ENCODE measurements at regions of chr19 and their contacts with region 1.

Region 1: DNA sequence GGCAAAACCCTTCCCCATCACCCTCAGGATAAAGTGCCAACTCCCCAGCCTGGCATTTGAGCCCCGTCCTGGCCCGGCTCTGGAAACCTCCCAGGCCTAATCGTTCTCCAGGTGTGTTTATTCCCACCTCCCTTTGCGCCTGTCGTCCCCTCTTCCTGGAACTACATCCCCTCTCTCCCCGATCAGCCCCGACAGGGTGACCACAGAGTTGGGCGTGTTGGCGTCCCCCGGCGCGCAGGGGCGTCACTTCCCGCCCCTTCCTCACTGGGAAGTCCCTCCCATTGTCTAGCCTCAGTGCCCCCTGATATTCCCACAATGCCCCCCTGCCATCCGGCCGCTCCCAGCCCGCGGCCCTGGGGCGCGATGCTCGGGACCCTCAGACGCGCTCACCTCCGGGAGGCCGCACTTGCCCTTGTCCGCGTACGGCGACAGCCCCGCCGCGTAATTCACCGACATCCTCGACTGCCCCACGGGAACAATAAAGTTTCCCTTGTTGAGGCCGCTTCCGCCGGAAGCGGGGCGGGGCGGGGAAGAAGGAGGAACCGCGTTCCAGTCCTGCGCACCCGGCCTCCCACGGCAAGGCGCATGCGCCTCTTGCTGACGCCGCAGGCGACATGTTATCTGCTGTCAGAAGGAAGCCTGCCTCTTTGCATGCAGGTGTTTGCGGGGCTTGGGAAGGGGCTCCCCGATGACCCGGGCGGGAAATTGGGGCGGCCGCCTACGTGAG is at the starts of genes ANKRD24 and SIRT6:
- DNase-seq: peak; percentile 91
- H3K4me3 ChIP-seq: peak within 1 kb of the TSS; percentile 91 to 94 (median 93)
- H3K27ac ChIP-seq: peak within 1 kb of the TSS; percentile 45
- H3K4me1 ChIP-seq: peaks cover 13% of the 10 kb centered on the region
- H3K27me3 ChIP-seq: no peaks in the 10 kb centered on the region
- CTCF ChIP-seq: no peak
- total RNA-seq, gene ANKRD24: 0.67 to 0.73 TPM
- total RNA-seq, gene SIRT6: 8.7 to 28.8 TPM

Region 2: DNA sequence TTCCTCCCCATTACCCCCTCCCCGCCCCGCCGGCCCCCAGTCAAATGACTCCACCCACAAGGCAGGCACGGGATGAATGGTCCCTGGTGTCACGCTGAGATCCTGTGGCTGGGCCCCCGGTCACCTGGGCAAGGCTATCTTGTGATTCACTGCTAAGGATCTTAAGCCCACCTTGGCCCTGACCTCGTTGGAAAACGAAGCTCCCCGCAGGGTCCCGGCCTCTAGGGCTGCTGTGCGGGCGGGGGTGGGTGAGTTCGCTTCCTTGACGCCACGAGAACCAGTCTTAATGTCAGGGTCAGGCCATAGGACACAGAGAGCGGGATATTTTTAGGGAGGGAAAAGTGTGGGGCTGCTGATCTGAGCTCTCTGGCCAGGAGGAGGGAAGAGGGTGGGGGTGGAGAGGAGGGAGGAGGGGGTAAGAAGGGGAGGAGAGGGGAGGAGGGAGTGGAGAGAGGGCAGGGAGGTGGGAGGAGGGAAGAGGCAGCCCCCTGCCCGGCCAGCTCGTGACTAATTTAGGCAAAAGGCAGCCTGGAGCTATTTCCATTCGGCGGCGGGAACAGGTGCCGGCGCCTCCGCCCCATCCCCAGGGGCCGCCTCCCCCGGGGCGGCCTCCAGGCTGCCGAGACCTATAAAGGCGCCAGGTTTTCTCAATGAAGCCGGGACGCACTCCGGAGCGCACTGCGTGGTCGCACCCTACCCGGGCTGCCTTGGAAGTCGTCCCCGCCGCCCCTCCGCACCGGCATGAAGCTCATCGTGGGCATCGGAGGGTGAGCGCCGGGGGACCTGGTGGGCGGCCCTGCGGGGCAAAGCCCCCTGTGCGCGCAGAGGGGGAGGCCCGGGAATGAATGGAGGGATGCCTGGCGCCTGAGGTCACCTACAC is 249.1 kb before region 1 on chr19 and contains the start of gene NMRK2:
- CTCF ChIA-PET with region 1: no interaction called
- dilution Hi-C with region 1: loop called (anchors 5 kb)
- in situ Hi-C with region 1: no loop called
- intact Hi-C with region 1: no loop called
- DNase-seq: no peak
- H3K4me3 ChIP-seq: no peak within 1 kb of the TSS
- H3K27ac ChIP-seq: no peak within 1 kb of the TSS
- H3K4me1 ChIP-seq: no peaks in the 10 kb centered on the region
- H3K27me3 ChIP-seq: peaks cover 8% of the 10 kb centered on the region
- CTCF ChIP-seq: no peak
- total RNA-seq, gene NMRK2: not detected

Region 3: GRCh38 chr19:4065430-4066175 is 116.6 kb before region 1 on chr19:
- CTCF ChIA-PET with region 1: no interaction called
- dilution Hi-C with region 1: loop called (anchors 5 kb)
- in situ Hi-C with region 1: no loop called
- intact Hi-C with region 1: loop called (anchors 1 kb)
- DNase-seq: peak; percentile 92
- H3K4me3 ChIP-seq: peak overlapping the region; percentile 88 to 92 (median 92)
- H3K27ac ChIP-seq: no peak overlapping the region
- H3K4me1 ChIP-seq: peaks cover 31% of the 10 kb centered on the region
- H3K27me3 ChIP-seq: no peaks in the 10 kb centered on the region
- CTCF ChIP-seq: no peak

Region 4: GRCh38 chr19:4139614-4140236 is 42.5 kb before region 1 on chr19:
- CTCF ChIA-PET with region 1: interaction called, 4 read pairs
- dilution Hi-C with region 1: no loop called
- in situ Hi-C with region 1: no loop called
- intact Hi-C with region 1: loop called (anchors 1 kb)
- DNase-seq: peak; percentile 54
- H3K4me3 ChIP-seq: no peak overlapping the region
- H3K27ac ChIP-seq: no peak overlapping the region
- H3K4me1 ChIP-seq: no peaks in the 10 kb centered on the region
- H3K27me3 ChIP-seq: no peaks in the 10 kb centered on the region
- CTCF ChIP-seq: peak; percentile 86 to 89

Region 5: GRCh38 chr19:4224470-4224869 is 42.2 kb after region 1 on chr19:
- CTCF ChIA-PET with region 1: no interaction called
- dilution Hi-C with region 1: loop called (anchors 5 kb)
- in situ Hi-C with region 1: no loop called
- intact Hi-C with region 1: no loop called
- DNase-seq: no peak
- H3K4me3 ChIP-seq: no peak overlapping the region
- H3K27ac ChIP-seq: no peak overlapping the region
- H3K4me1 ChIP-seq: peaks cover 7% of the 10 kb centered on the region
- H3K27me3 ChIP-seq: no peaks in the 10 kb centered on the region
- CTCF ChIP-seq: no peak

Region 6: DNA sequence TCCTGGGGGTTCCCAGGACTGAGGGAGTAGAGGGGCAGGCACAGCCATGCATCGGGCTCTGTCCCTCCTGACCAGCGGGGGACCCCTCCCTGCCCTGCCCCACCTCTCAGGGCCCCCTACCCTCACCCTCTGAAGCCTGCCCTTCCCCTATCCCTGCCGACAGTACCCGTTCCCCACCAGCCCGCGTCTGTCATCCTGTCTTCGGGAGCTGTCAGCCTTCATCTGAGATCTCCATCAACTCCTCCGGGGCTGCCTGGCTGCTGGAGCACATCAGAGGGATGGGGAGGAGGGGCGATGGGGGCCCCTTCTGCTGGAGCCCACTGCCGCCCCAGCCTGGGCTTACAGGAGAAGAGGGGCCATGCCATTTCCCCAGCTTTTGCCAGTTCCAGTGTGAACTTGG is 90.6 kb after region 1 on chr19:
- CTCF ChIA-PET with region 1: no interaction called
- dilution Hi-C with region 1: loop called (anchors 5 kb)
- in situ Hi-C with region 1: no loop called
- intact Hi-C with region 1: no loop called
- DNase-seq: no peak
- H3K4me3 ChIP-seq: no peak overlapping the region
- H3K27ac ChIP-seq: no peak overlapping the region
- H3K4me1 ChIP-seq: no peaks in the 10 kb centered on the region
- H3K27me3 ChIP-seq: no peaks in the 10 kb centered on the region
- CTCF ChIP-seq: no peak